ENCODE measurements at regions of chr1 and their contacts with region 1.

Region 1: DNA sequence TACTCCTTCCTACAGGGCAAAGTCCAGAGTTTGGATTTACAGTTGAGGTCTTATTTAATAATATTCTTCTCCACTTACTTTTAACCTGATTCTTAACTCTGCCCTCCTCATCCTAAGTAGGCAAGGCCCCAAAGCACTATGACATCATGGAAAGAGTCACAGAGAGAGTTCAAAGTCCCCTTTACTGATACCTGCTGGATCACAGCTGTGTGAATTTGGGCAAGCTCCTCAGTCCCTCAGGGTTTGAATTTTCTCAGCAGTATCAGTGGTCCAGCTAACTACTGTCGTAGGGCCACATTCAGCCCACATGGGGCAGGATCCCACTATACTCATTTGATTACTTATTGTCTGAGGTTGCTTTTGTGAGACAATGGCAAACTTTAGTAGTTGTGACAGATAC is 16.0 kb downstream of the TYW3 start:
- DNase-seq: no peak
- H3K4me3 ChIP-seq: no peak overlapping the region
- H3K27me3 ChIP-seq: no peaks in the 10 kb centered on the region
- CTCF ChIP-seq: no peak

Region 2: DNA sequence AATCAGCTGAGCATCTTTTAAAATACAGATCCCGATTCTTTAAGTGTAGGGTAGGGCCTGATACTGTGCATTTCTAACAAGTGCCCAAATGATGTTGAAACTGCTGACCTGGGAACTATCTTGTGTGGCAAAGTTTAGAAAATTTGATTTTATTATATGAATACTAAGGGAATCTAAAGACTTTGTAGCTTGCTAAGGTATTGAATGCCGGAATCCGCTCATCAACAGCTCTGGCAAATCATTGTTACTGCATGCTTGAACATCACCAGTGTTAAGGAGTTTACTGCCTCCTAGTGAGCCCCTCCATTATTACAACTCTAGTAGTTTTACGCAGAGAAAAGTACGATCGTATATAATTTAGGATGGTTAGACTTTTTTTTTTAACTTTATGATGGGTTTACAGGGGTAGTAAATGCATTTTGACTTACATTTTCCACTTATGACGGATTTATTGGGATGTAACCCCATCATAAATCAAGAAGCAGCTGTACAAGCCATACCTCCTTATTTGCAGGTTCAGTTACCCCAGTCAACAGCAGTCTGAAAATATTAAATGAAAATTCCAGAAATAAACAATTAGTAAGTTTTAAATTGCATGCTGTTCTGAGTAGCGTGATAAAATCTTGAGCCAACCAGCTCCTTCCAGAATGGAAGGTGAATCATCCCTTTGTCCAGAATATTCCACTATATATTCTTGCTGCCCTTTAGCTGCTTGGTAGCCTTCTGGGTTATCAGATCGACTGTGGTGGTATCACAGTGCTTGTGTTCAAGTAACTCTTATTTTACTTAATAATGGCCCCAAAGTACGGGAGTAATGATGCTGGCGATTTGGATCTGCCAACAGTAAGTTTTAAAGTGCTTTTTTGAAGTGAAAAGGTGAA is 15.1 kb before region 1 on chr1:
- CTCF ChIA-PET with region 1: interaction called, 15 read pairs
- POLR2A ChIA-PET with region 1: no interaction called
- DNase-seq: peak; percentile 41
- H3K4me3 ChIP-seq: peak overlapping the region; percentile 68
- H3K27me3 ChIP-seq: no peaks in the 10 kb centered on the region
- CTCF ChIP-seq: peak; percentile 74

Region 3: DNA sequence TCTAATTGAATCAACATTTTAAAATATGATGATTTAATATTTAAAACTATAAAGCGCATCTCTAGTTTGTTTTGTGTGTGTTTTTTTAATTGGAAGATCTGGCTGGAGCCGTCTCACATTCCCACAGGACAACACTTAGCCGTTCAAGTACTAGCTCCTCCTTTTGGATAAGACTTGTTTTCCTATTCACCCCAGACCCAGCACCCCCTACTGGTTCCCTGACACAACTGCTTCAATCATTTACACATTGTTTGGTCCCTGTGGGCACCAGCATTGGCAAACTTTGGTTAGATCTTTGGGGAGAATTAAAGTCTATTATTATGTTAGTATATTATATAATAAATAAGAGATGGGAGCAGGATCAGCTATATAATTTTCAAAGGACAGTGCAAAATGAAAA is 18.5 kb after region 1 on chr1:
- CTCF ChIA-PET with region 1: no interaction called
- POLR2A ChIA-PET with region 1: no interaction called
- DNase-seq: no peak
- H3K4me3 ChIP-seq: no peak overlapping the region
- H3K27me3 ChIP-seq: no peaks in the 10 kb centered on the region
- CTCF ChIP-seq: no peak

Measured in BJ (cell line).